Activated CD4-positive, alpha-beta T cell treated with anti-CD3 and anti-CD28 coated beads, Interleukin-2, amount 10 ng/mL, durations not matched to agents 24 days and 14 days (primary cell): ENCODE measurements at regions of chr2 and their contacts with region 1.

Region 1: DNA sequence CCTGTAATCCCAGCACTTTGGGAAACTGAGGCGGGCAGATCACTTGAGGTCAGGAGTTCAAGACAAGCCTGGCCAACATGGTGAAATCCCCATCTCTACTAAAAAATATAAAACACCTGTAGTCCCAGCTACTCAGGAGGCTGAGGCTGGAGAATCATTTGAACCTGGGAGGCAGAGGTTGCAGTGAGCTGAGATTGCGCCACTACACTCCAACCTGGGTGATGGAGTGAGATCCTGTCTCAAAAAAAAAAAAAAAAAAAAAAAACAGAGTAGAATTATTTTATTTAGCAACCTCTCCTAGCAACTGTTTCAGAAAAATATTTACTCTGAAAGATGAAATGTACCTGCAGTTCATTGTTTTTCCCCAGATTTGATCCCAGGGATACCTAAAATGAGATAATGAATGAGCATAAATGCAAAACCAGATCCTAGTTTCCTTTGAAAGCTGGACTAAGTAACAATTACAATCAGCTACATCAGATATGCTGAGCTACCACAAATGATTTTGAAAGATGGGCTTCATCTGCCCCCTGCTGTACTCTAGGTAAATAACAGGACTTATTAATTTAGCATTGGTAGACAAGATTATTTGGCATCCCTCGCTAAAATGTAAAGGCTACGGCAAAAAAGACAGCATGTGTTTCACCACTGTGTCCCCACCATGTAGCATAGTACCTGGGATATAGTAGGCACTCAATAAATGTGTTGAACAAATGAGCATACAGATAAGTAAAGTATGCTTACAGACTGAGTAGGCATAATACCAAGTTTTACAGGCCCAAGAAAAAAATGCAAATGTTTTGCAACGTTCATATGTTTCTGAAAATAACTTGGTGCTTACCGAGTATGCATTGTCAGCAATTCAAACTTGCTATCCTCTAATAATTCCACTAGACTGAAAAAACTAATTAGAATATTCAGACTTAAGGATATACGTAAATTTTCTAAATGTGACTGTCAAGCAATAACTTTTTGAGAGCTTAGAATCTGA is 102.5 kb downstream of the ATL2 start:
- DNase-seq: peak; percentile 79
- H3K4me3 Mint-ChIP-seq: no peak overlapping the region
- H3K27ac Mint-ChIP-seq: no peak overlapping the region
- H3K4me1 Mint-ChIP-seq: peaks cover 8% of the 10 kb centered on the region
- H3K27me3 Mint-ChIP-seq: peaks cover 5% of the 10 kb centered on the region

Region 2: DNA sequence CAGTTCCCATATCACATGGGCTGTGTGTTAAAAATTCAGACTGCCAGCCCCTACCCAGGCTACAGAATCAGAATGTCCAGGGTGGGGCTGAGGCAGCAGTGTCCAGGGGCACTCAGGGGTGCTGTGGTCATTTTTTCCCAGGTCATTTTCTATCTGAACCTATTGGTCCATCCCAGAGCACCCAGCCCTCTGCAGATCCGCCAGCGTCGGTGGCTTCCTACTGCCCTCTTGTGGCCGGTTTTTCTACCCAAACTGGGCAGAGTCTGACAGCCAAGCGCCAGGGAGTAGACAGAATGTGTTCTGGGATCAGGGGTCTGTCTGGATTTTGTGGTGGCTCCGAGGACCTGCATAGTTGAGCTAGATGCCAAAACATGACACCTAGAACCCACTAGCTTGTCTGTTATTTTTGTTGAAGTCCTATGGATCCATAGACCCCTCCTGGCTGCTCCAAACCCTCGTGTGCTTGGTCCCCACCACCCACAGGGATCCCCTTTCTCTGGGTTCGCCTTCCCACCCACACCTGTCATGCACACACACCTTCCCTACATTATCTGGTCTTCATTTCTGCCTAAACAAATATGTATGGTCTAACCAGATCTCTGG is 383.6 kb before region 1 on chr2:
- intact Hi-C with region 1: loop called (anchors 2 kb)
- DNase-seq: peak; percentile 88
- H3K4me3 Mint-ChIP-seq: no peak overlapping the region
- H3K27ac Mint-ChIP-seq: no peak overlapping the region
- H3K4me1 Mint-ChIP-seq: peaks cover 15% of the 10 kb centered on the region
- H3K27me3 Mint-ChIP-seq: peaks cover 29% of the 10 kb centered on the region

Region 3: GRCh38 chr2:37982147-37982582 is 292.4 kb before region 1 on chr2:
- intact Hi-C with region 1: loop called (anchors 1 kb)
- DNase-seq: peak; percentile 86
- H3K4me3 Mint-ChIP-seq: no peak overlapping the region
- H3K27ac Mint-ChIP-seq: no peak overlapping the region
- H3K4me1 Mint-ChIP-seq: peaks cover 8% of the 10 kb centered on the region
- H3K27me3 Mint-ChIP-seq: peaks cover 13% of the 10 kb centered on the region

Region 4: GRCh38 chr2:38115216-38116032 is 159.2 kb before region 1 on chr2:
- intact Hi-C with region 1: loop called (anchors 2 kb)
- DNase-seq: peak; percentile 92
- H3K4me3 Mint-ChIP-seq: no peak overlapping the region
- H3K27ac Mint-ChIP-seq: no peak overlapping the region
- H3K4me1 Mint-ChIP-seq: peaks cover 8% of the 10 kb centered on the region
- H3K27me3 Mint-ChIP-seq: peaks cover 12% of the 10 kb centered on the region

Region 5: DNA sequence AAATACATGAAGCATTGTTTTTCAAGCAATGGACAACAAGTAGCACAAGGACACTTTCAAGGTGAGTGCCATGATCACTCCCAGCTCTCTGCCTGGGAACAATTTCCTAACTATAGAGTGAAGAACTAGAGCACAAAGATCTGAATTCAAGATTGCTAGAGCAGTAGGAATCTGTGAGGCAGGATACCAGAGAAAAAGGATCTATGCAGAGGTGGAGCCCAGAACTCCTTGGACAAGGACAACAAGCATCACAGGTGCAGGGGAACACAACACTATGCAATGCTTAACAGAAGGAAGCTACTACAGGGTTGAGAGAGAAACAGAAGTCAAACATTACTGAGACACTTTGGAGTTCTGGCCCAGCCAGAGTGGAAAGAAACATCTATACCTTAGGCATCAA is 77.8 kb after region 1 on chr2:
- intact Hi-C with region 1: no loop called
- DNase-seq: no peak
- H3K4me3 Mint-ChIP-seq: no peak overlapping the region
- H3K27ac Mint-ChIP-seq: no peak overlapping the region
- H3K4me1 Mint-ChIP-seq: peaks cover 11% of the 10 kb centered on the region
- H3K27me3 Mint-ChIP-seq: no peaks in the 10 kb centered on the region

Region 6: DNA sequence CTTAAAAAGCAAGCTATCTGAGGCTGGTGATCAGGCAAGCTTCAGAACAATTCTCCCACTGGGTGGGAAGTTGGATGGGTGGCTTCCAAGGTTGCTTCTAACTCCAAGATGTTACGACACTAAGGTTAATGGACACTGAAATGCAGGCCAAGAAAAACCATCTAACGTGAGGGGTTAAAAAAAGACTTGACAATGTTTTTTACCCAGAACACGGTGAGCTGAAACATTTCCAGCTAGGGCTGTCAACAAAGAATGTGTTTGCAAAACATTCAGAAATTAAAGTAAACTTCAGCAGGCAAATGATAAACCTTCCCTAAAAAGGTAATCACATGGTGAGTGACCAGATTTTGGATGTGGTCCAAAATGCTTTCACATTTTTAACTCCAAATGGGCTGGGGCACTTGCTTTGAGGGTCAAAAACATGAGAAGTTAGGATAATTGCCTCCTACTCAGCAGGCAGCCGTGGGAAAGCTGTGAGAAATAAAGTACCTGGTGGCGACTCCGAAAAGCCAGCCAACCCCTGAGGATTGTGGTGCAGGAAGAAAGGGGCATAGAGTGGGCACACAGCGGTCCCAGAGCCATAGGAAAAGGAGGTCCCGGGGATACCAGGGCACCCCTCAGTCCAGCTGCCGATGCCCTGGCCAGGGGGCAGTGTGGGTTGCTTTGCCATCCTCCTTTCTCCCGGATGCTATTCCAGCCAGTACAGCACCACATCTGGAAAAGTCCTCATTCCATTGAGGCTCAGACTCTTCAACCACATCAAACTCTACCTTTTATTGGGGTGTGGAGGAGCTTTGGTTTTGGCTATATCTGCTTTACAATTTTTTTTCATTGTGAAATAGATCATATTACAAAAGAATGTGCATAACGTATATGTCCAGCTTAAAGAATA is 192.5 kb after region 1 on chr2:
- intact Hi-C with region 1: no loop called
- DNase-seq: no peak
- H3K4me3 Mint-ChIP-seq: no peak overlapping the region
- H3K27ac Mint-ChIP-seq: no peak overlapping the region
- H3K4me1 Mint-ChIP-seq: peaks cover 6% of the 10 kb centered on the region
- H3K27me3 Mint-ChIP-seq: peaks cover 32% of the 10 kb centered on the region

Region 7: GRCh38 chr2:38610851-38611801 is 336.5 kb after region 1 on chr2:
- intact Hi-C with region 1: no loop called
- DNase-seq: no peak
- H3K4me3 Mint-ChIP-seq: no peak overlapping the region
- H3K27ac Mint-ChIP-seq: no peak overlapping the region
- H3K4me1 Mint-ChIP-seq: peaks cover 42% of the 10 kb centered on the region
- H3K27me3 Mint-ChIP-seq: no peaks in the 10 kb centered on the region